Endothelial cell of umbilical vein (primary cell): ENCODE measurements at regions of chr10 and their contacts with region 1.

Region 1: GRCh38 chr10:25016376-25017154 is at the start of gene THNSL1:
- DNase-seq: peak; percentile 99
- H3K4me3 ChIP-seq: peak within 1 kb of the TSS; percentile 50 to 85 (median 62)
- H3K27ac ChIP-seq: peak within 1 kb of the TSS; percentile 88
- H3K4me1 ChIP-seq: peaks cover 17% of the 10 kb centered on the region
- H3K27me3 ChIP-seq: no peaks in the 10 kb centered on the region
- CTCF ChIP-seq: no peak
- POLR2A ChIP-seq: peak; percentile 83
- total RNA-seq, gene THNSL1: 1.9 and 2.1 TPM in 2 replicates

Region 2: GRCh38 chr10:24894309-24894708 is 122.3 kb before region 1 on chr10:
- CTCF ChIA-PET with region 1: no interaction called
- POLR2A ChIA-PET with region 1: no interaction called
- dilution Hi-C with region 1: no loop called
- intact Hi-C with region 1: loop called (anchors 5 kb)
- DNase-seq: peak; percentile 52
- H3K4me3 ChIP-seq: no peak overlapping the region
- H3K27ac ChIP-seq: no peak overlapping the region
- H3K4me1 ChIP-seq: peaks cover 26% of the 10 kb centered on the region
- H3K27me3 ChIP-seq: no peaks in the 10 kb centered on the region
- CTCF ChIP-seq: no peak
- POLR2A ChIP-seq: no peak

Region 3: DNA sequence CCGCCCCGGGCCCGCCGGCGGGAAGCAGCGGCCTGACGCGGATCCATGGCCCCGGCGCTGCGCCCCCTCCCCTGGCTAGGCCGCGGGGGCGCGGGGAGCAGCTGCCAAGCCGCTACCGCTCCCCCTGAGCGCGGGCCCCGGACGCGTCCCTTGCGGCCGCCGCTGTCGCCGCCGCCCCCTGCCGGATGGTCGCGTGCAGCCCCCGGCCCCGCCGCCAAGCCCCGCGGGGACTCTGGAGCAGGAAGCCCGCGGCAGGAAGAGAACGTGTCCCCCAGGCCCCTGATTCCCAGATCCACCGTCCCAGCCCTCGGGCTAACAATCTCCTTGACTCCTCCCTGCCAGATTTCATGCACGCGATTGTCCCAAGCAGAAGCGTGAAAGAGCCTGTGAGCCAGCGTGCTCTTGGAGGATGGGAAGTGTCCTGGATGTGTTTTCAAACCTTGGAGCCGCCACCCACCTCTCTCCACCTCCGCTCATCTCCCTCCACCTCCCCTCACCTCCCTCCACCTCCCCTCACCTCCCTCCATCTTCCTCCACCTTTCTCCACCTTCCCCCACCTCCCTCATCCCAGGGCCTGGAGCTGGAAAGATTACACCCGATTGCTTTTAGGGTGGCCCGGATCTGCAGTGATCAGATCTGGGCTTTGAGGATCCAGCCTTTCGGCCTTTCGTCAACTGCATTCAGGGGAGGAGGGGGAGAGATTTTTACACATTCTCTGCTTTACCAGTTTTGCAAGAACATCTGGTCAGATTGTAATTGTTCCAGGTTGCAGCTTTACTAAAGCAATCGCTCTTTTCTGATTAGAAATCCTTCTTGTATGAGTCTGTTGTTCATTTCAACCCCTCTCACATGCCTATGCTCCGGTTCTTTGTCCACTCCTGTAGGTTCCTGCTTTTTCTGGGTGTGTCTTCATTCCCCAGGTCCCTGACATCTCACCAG is 63.6 kb before region 1 on chr10:
- CTCF ChIA-PET with region 1: interaction called, 3 read pairs
- POLR2A ChIA-PET with region 1: no interaction called
- dilution Hi-C with region 1: no loop called
- intact Hi-C with region 1: loop called (anchors 2 kb)
- DNase-seq: peak; percentile 31
- H3K4me3 ChIP-seq: peak overlapping the region; percentile 38 to 47 (median 44)
- H3K27ac ChIP-seq: peak overlapping the region; percentile 64
- H3K4me1 ChIP-seq: peaks cover 9% of the 10 kb centered on the region
- H3K27me3 ChIP-seq: no peaks in the 10 kb centered on the region
- CTCF ChIP-seq: peak in 1 of 2 donors; percentile 21
- POLR2A ChIP-seq: peak; percentile 18

Region 4: DNA sequence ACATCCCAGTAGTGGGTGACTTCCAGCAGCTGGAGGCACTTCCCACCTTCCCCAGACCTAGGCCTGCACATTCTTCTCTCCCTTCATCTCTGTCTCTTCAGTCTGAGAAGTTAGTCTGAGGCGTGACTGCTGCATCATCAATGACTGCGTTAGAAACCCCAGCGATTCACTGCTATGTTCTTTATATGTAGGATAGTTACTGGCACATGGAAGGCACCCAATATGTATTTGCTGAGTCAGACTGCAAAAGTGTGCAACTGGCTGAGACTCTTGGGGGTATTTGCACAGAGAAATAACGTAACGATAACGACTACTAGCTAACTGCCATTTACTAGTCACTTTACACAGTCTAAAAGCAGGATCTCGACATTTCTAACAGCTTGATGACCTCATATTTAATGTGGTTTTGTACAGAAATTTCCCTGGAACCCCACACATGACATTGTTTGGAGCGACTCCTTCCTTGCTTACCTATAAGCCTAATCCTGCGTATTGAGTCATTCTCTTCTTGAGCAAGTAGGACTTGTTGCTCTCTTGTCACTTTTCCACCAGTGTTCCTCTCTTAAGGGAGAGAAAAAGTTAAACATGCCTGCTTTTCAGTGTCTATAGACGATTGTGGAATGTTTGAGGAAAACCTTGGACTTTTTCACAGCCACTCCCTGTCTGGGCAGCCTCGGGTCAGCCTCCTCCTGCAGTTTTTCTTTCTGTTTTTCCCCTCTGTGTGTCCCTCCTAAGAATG is 45.3 kb after region 1 on chr10:
- CTCF ChIA-PET with region 1: no interaction called
- POLR2A ChIA-PET with region 1: no interaction called
- dilution Hi-C with region 1: no loop called
- intact Hi-C with region 1: loop called (anchors 1 kb)
- DNase-seq: no peak
- H3K4me3 ChIP-seq: no peak overlapping the region
- H3K27ac ChIP-seq: peak overlapping the region; percentile 93
- H3K4me1 ChIP-seq: peaks cover 29% of the 10 kb centered on the region
- H3K27me3 ChIP-seq: no peaks in the 10 kb centered on the region
- CTCF ChIP-seq: no peak
- POLR2A ChIP-seq: no peak